ENCODE measurements at regions of chr6 and their contacts with region 1.

Region 1: DNA sequence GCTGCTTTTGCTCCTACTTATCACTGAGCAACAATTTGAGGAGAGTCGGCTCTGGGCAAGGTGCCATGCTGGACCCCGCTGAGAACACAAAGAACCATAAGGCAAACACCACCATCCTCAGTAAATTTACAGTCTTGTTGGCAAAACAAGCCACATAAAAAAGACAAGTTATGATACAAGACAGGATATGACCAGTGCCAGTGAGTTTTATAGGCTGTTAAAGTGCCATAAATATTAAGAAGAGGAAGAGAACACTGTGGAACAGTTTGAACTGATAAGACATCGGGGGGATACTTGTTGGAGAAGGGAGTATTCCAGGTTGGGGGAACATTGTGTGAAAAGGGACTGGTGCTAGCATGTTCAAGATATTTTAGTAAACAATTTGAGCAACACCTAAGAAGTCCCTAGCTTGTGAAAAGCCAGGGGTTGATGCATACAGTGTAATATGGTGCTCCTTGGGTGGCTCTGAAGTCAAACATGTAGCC is 25.3 kb upstream of the RIPOR2 start:
- DNase-seq: no peak
- ATAC-seq: peak; percentile 52
- H3K4me3 Mint-ChIP-seq: peak overlapping the region; percentile 34
- H3K27ac Mint-ChIP-seq: peak overlapping the region; percentile 77
- H3K4me1 Mint-ChIP-seq: peaks cover 69% of the 10 kb centered on the region
- H3K27me3 Mint-ChIP-seq: no peaks in the 10 kb centered on the region
- CTCF ChIP-seq: no peak

Region 2: GRCh38 chr6:24949020-24949569 is 11.9 kb before region 1 on chr6:
- CTCF ChIA-PET with region 1: interaction called, 18 read pairs
- POLR2A ChIA-PET with region 1: interaction called, 5 read pairs
- intact Hi-C with region 1: no loop called
- DNase-seq: peak; percentile 64
- ATAC-seq: peak; percentile 50
- H3K4me3 Mint-ChIP-seq: peak overlapping the region; percentile 37
- H3K27ac Mint-ChIP-seq: peak overlapping the region; percentile 88
- H3K4me1 Mint-ChIP-seq: peaks cover 70% of the 10 kb centered on the region
- H3K27me3 Mint-ChIP-seq: no peaks in the 10 kb centered on the region
- CTCF ChIP-seq: no peak

Measured in activated CD8-positive, alpha-beta T cell treated with anti-CD3 and anti-CD28 coated beads for 36 hours (primary cell).